CD8-positive, alpha-beta memory T cell (primary cell): ENCODE measurements at regions of chr14 and their contacts with region 1.

Region 1: DNA sequence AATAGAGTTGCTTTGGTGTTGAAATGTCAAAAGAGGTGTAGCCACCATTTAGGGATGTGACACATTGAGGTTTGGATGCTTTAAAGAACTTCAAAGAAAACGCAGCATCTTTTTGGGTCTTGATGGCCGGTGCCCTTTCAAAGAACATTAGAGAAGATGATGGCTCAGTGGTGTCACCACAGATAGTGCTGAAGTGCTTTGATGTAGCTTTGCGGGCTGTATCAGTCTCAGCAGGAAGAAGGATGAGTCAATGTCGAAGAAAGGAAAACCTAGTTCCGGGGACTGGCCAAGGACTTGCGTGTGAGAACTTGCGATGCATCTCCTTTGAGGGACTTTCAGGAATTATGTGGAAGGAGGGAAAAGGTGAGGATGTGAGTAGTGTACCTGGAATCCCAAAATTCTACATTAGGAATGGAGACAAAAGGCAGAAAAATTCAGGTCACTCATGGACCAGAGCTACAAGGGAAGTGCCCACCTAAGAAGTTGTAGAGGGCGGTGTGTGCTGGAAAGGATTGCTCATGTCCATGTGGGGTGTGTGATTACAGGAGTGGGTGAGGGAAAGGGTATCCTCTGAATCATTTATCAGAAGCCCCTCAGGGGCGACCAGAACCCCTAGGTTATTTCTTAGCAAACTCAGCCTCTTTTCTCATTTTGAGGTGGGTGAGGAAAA is 39.7 kb upstream of the GZMB start:
- DNase-seq: peak; percentile 42 to 84 (median 61)
- H3K4me3 ChIP-seq: peak overlapping the region; percentile 38
- H3K4me3 Mint-ChIP-seq: peak overlapping the region; percentile 67 to 88 (median 86)
- H3K27ac ChIP-seq: peak overlapping the region; percentile 38
- H3K27ac Mint-ChIP-seq: peak overlapping the region; percentile 56 to 98 (median 96)
- H3K4me1 ChIP-seq: peaks cover 54% of the 10 kb centered on the region
- H3K4me1 Mint-ChIP-seq: peaks cover 61 to 76% (median 75%) of the 10 kb centered on the region in 3 donors
- H3K27me3 ChIP-seq: no peaks in the 10 kb centered on the region
- H3K27me3 Mint-ChIP-seq: no peaks in the 10 kb centered on the region

Region 2: GRCh38 chr14:24605435-24606190 is 68.1 kb before region 1 on chr14:
- CTCF ChIA-PET with region 1: interaction called, 13 read pairs
- POLR2A ChIA-PET with region 1: no interaction called
- DNase-seq: peak; percentile 21 to 74 (median 48)
- H3K4me3 ChIP-seq: no peak overlapping the region
- H3K4me3 Mint-ChIP-seq: peak overlapping the region in 6 of 7 donors; percentile 58 to 83 (median 66)
- H3K27ac ChIP-seq: peak overlapping the region; percentile 0
- H3K27ac Mint-ChIP-seq: peak overlapping the region; percentile 1 to 96 (median 88)
- H3K4me1 ChIP-seq: peaks cover 45% of the 10 kb centered on the region
- H3K4me1 Mint-ChIP-seq: peaks cover 52 to 53% (median 53%) of the 10 kb centered on the region in 3 donors
- H3K27me3 ChIP-seq: no peaks in the 10 kb centered on the region
- H3K27me3 Mint-ChIP-seq: peaks cover 5 to 15% of the 10 kb centered on the region in 2 donors

Region 3: GRCh38 chr14:24662753-24663152 is 10.9 kb before region 1 on chr14:
- CTCF ChIA-PET with region 1: no interaction called
- POLR2A ChIA-PET with region 1: no interaction called
- DNase-seq: no peak
- H3K4me3 ChIP-seq: no peak overlapping the region
- H3K4me3 Mint-ChIP-seq: peak overlapping the region in 2 of 7 donors; percentile 28 to 73
- H3K27ac ChIP-seq: no peak overlapping the region
- H3K27ac Mint-ChIP-seq: peak overlapping the region in 6 of 8 donors; percentile 16 to 73 (median 40)
- H3K4me1 ChIP-seq: peaks cover 16% of the 10 kb centered on the region
- H3K4me1 Mint-ChIP-seq: peaks cover 54 to 70% (median 66%) of the 10 kb centered on the region in 3 donors
- H3K27me3 ChIP-seq: no peaks in the 10 kb centered on the region
- H3K27me3 Mint-ChIP-seq: peaks cover 0 to 6% of the 10 kb centered on the region in 2 donors

Region 4: DNA sequence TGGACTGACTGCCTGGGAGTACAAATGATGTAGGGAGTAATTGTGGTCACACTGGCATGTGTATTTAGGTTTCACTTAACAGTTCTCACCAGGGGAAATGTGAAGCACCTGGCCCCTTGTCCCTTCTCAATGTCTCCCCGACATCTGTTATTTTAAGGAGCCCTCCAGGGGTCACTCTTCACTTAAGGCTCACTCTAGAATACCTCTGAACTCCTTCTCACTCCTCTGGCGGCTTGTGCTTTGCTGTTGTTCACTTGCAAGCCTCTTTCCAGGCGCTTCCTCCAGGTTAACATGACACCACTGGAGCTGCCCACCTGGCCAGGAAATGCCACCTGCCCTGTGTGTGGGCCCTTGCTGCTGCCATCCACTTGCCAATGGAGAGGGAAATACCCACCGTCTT is 16.8 kb after region 1 on chr14:
- CTCF ChIA-PET with region 1: interaction called, 20 read pairs
- POLR2A ChIA-PET with region 1: interaction called, 12 read pairs
- DNase-seq: peak in 1 of 5 donors; percentile 24
- H3K4me3 ChIP-seq: no peak overlapping the region
- H3K4me3 Mint-ChIP-seq: no peak overlapping the region
- H3K27ac ChIP-seq: no peak overlapping the region
- H3K27ac Mint-ChIP-seq: peak overlapping the region in 2 of 8 donors; percentile 24 to 33
- H3K4me1 ChIP-seq: peaks cover 39% of the 10 kb centered on the region
- H3K4me1 Mint-ChIP-seq: peaks cover 29 to 39% (median 31%) of the 10 kb centered on the region in 3 donors
- H3K27me3 ChIP-seq: no peaks in the 10 kb centered on the region
- H3K27me3 Mint-ChIP-seq: no peaks in the 10 kb centered on the region